Heart right ventricle (tissue), 16 donors: ENCODE measurements at regions of chr12 and their contacts with region 1.

Region 1: GRCh38 chr12:124518051-124518932 is 49.1 kb downstream of the NCOR2 start:
- DNase-seq: peak; percentile 98 to 99
- ATAC-seq: peak; percentile 67 to 86 (median 78)
- H3K4me3 ChIP-seq: peak overlapping the region in 9 of 10 donors; percentile 41 to 68 (median 61)
- H3K27ac ChIP-seq: peak overlapping the region; percentile 82 to 100 (median 97)
- H3K4me1 ChIP-seq: peaks cover 43 to 99% (median 86%) of the 10 kb centered on the region in 9 donors
- H3K27me3 ChIP-seq: no peaks in the 10 kb centered on the region
- CTCF ChIP-seq: no peak

Region 2: GRCh38 chr12:124369055-124369900 is 149.0 kb before region 1 on chr12:
- intact Hi-C with region 1: loop called in 1 of 10 experiments (anchors 5 kb)
- DNase-seq: peak; percentile 91 to 94
- ATAC-seq: peak; percentile 83 to 93 (median 88)
- H3K4me3 ChIP-seq: peak overlapping the region in 2 of 10 donors; percentile 4 to 18
- H3K27ac ChIP-seq: peak overlapping the region; percentile 81 to 96 (median 91)
- H3K4me1 ChIP-seq: peaks cover 45 to 83% (median 66%) of the 10 kb centered on the region in 9 donors
- H3K27me3 ChIP-seq: no peaks in the 10 kb centered on the region
- CTCF ChIP-seq: peak; percentile 17 to 69 (median 51)

Region 3: DNA sequence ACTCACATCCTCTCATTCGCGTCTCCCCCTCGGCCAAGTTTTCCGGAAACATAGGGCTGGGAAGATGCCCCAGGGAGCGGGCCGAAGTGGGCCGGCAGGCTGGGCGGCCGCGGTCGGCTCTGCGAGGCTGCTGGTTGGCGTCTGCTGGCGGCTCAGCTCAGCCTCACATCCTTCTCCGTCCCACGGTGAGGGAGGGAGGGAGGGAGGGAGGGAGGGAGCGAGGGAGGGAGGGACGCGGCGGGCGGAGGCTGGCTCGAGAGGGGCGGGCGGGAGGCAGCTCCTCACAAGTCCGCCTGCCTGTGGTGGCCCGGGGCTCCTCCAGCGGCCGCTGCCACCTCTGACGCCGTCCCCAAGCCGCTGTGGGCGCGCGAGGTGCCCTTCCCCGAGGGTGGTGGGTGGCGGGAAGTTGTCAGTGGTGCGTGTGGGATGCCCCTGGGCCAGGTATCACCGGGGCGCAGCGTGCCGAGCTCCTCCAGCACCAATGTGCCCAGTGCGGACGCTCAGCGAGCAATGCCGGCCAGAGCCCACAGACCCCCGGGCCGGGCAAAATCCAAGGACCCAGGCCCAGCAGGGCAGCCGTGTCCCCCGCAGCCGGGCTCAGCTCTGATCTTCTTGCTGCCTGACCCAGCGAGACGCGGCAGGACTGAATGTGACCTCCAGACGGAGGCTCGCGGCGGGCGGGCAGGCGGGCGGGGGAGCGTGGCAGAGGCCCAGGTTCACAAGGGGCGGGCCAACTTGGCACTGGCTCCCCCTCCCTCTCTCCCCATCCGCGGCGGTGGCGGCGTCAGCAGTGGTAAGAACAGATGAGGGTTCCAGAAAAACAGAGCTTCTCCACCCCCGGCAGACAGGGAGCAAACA is 129.4 kb before region 1 on chr12:
- intact Hi-C with region 1: loop called in 2 of 10 experiments (anchors 5 to 10 kb)
- DNase-seq: peak; percentile 86 to 89
- ATAC-seq: peak; percentile 53 to 71 (median 60)
- H3K4me3 ChIP-seq: peak overlapping the region; percentile 41 to 74 (median 59)
- H3K27ac ChIP-seq: peak overlapping the region; percentile 88 to 99 (median 97)
- H3K4me1 ChIP-seq: peaks cover 61 to 100% (median 89%) of the 10 kb centered on the region in 9 donors
- H3K27me3 ChIP-seq: no peaks in the 10 kb centered on the region
- CTCF ChIP-seq: peak in 3 of 9 donors; percentile 8 to 32 (median 25)

Region 4: DNA sequence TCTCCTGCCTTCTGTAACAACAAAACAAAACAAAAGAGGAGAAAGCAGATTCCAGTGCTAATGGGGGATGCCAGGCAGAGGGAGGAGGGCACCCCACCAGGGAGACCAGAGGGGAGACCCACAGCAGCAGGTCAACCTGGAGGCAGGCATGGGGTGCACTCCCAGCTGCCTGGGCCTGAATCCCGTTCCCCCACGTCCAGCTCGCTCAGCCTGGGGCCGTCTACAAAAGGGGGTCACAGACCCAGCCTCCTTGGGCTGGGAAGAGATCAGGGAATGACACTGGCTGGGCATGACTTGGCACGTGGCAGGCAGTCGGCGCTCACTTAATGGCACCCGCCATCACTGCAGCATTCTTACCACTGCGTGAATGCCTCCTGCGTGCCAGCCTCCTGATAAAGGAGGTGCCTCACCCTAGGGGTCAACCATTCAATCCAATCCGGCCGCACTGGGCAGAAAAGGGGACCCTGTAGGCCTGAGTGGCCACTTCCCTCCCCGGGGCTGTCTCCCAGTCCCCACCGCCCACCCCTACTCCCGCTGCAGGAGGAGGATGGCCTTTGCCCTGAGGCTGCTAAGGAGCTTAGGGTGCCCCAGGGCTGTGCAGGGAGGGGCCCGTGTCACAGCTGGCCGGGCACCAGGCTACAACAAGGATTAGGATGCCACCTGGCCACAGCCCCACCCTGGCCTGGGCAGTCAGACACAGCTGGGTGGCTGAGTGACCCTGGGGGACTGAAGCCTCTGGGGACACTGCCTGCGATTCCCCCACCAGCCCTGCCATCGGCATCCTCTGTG is 38.4 kb before region 1 on chr12:
- intact Hi-C with region 1: loop called in 1 of 10 experiments (anchors 5 kb)
- DNase-seq: peak in 1 of 2 donors; percentile 49
- ATAC-seq: peak; percentile 6 to 65 (median 44)
- H3K4me3 ChIP-seq: no peak overlapping the region
- H3K27ac ChIP-seq: peak overlapping the region in 8 of 10 donors; percentile 14 to 80 (median 47)
- H3K4me1 ChIP-seq: peaks cover 5 to 52% (median 29%) of the 10 kb centered on the region in 9 donors
- H3K27me3 ChIP-seq: no peaks in the 10 kb centered on the region
- CTCF ChIP-seq: no peak

Region 5: GRCh38 chr12:124556896-124557501 is 38.7 kb after region 1 on chr12:
- intact Hi-C with region 1: loop called in 5 of 10 experiments (anchors 5 to 10 kb)
- DNase-seq: peak in 1 of 2 donors; percentile 44
- ATAC-seq: peak in 5 of 8 donors; percentile 20 to 27 (median 24)
- H3K4me3 ChIP-seq: no peak overlapping the region
- H3K27ac ChIP-seq: peak overlapping the region in 7 of 10 donors; percentile 28 to 67 (median 46)
- H3K4me1 ChIP-seq: peaks cover 31 to 96% (median 75%) of the 10 kb centered on the region in 9 donors
- H3K27me3 ChIP-seq: no peaks in the 10 kb centered on the region
- CTCF ChIP-seq: peak in 2 of 9 donors; percentile 12 to 20